T-cell (primary cell): ENCODE measurements at regions of chr4 and their contacts with region 1.

Region 1: DNA sequence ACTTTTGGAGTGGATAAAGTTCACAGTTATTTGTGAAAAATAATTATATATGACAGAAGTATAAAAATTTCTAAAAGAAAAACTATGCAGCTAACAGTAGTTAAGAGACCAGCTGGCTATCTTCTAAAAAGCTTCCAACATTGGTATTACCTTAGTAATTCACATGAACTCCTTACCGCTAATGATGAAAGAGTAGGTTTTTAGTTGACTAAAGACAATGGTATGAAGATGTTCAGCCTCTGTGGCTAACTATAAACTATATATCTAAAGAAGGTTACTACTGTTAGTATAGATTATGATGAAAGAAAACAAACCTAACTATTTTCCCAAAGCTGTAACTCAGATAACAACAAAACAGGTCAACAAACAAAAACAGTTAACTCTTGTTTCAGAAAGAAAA is 10.4 kb downstream of the CCNI start:
- DNase-seq: no peak
- ATAC-seq: no peak
- H3K4me3 ChIP-seq: no peak overlapping the region
- H3K4me3 Mint-ChIP-seq: no peak overlapping the region
- H3K27ac ChIP-seq: no peak overlapping the region
- H3K27ac Mint-ChIP-seq: no peak overlapping the region
- H3K4me1 ChIP-seq: peaks cover 6 to 8% of the 10 kb centered on the region in 2 experiments
- H3K4me1 Mint-ChIP-seq: peaks cover 36 to 49% (median 44%) of the 10 kb centered on the region in 3 donors
- H3K27me3 ChIP-seq: no peaks in the 10 kb centered on the region
- H3K27me3 Mint-ChIP-seq: no peaks in the 10 kb centered on the region

Region 2: DNA sequence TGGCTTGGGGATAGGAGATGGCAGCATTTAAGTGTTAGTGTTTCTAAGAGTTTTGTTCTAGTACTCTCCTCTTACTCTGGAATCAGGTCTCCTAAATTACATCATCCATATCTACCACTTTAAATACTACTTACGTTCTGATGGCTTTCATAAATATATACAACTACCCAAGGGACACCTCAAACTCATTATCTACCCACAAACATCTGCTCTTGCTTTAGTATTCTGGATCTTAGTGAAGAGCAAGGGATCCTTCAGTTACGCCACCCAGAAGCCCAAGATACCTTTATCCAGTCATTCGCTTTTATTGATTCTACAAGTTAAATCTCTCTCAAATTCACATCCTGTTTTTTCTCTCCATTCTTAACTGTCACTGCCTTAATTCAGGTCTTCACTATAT is 924.1 kb before region 1 on chr4:
- CTCF ChIA-PET with region 1: no interaction called
- POLR2A ChIA-PET with region 1: interaction called in 1 of 2 experiments, 10 read pairs
- DNase-seq: no peak
- ATAC-seq: no peak
- H3K4me3 ChIP-seq: no peak overlapping the region
- H3K4me3 Mint-ChIP-seq: no peak overlapping the region
- H3K27ac ChIP-seq: no peak overlapping the region
- H3K27ac Mint-ChIP-seq: no peak overlapping the region
- H3K4me1 ChIP-seq: peaks cover 0 to 8% of the 10 kb centered on the region in 2 experiments
- H3K4me1 Mint-ChIP-seq: peaks cover 44 to 55% (median 52%) of the 10 kb centered on the region in 3 donors
- H3K27me3 ChIP-seq: no peaks in the 10 kb centered on the region
- H3K27me3 Mint-ChIP-seq: no peaks in the 10 kb centered on the region

Region 3: DNA sequence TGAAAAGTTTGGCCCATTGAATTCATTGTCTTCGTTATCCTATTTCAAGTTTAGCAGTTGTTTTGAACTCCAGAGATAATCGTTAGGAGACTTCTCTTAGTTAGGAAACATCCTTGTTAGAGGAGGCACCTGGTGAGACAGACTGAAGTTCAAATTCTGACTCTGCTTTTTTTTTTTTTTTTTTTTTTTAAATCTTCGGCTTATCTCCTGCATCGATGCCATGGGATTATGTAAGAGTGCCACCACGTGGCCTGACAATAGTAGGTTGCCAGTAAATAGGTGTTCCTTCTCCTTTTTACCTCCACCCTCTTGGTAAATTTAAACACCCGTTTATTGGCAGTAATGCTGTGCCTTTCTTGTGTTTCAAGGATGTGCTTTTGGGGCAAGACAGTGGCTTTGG is 316.7 kb before region 1 on chr4:
- CTCF ChIA-PET with region 1: no interaction called
- POLR2A ChIA-PET with region 1: no interaction called
- DNase-seq: peak in 1 of 35 experiments; percentile 17
- ATAC-seq: no peak
- H3K4me3 ChIP-seq: no peak overlapping the region
- H3K4me3 Mint-ChIP-seq: no peak overlapping the region
- H3K27ac ChIP-seq: no peak overlapping the region
- H3K27ac Mint-ChIP-seq: no peak overlapping the region
- H3K4me1 ChIP-seq: no peaks in the 10 kb centered on the region
- H3K4me1 Mint-ChIP-seq: peaks cover 0 to 2% (median 2%) of the 10 kb centered on the region in 3 donors
- H3K27me3 ChIP-seq: no peaks in the 10 kb centered on the region
- H3K27me3 Mint-ChIP-seq: peaks cover 18 to 19% of the 10 kb centered on the region in 2 donors

Region 4: GRCh38 chr4:77193511-77194102 is 128.2 kb after region 1 on chr4:
- CTCF ChIA-PET with region 1: no interaction called
- POLR2A ChIA-PET with region 1: interaction called in 1 of 2 experiments, 11 read pairs
- DNase-seq: peak; percentile 51 to 85 (median 71)
- ATAC-seq: peak; percentile 98 to 99 (median 98)
- H3K4me3 ChIP-seq: peak overlapping the region; percentile 38 to 45
- H3K4me3 Mint-ChIP-seq: peak overlapping the region; percentile 82 to 86 (median 85)
- H3K27ac ChIP-seq: peak overlapping the region; percentile 63
- H3K27ac Mint-ChIP-seq: peak overlapping the region; percentile 94 to 98
- H3K4me1 ChIP-seq: peaks cover 13 to 17% of the 10 kb centered on the region in 2 experiments
- H3K4me1 Mint-ChIP-seq: peaks cover 18 to 20% (median 20%) of the 10 kb centered on the region in 3 donors
- H3K27me3 ChIP-seq: no peaks in the 10 kb centered on the region
- H3K27me3 Mint-ChIP-seq: peaks cover 0 to 3% of the 10 kb centered on the region in 2 donors